ENCODE measurements at regions of chr6 and their contacts with region 1.

Region 1: GRCh38 chr6:100001915-100002388 is 7.9 kb upstream of the MCHR2 start:
- DNase-seq: peak; percentile 44
- H3K4me3 Mint-ChIP-seq: no peak overlapping the region
- H3K27ac Mint-ChIP-seq: no peak overlapping the region
- H3K4me1 Mint-ChIP-seq: no peaks in the 10 kb centered on the region
- H3K27me3 Mint-ChIP-seq: peaks cover 6% of the 10 kb centered on the region

Region 2: GRCh38 chr6:99613409-99613704 is 388.6 kb before region 1 on chr6:
- CTCF ChIA-PET with region 1: no interaction called
- DNase-seq: peak; percentile 45
- H3K4me3 Mint-ChIP-seq: peak overlapping the region; percentile 50
- H3K27ac Mint-ChIP-seq: no peak overlapping the region
- H3K4me1 Mint-ChIP-seq: peaks cover 24% of the 10 kb centered on the region
- H3K27me3 Mint-ChIP-seq: peaks cover 92% of the 10 kb centered on the region

Region 3: GRCh38 chr6:100099189-100100074 is 97.5 kb after region 1 on chr6:
- CTCF ChIA-PET with region 1: interaction called, 37 read pairs
- DNase-seq: no peak
- H3K4me3 Mint-ChIP-seq: no peak overlapping the region
- H3K27ac Mint-ChIP-seq: no peak overlapping the region
- H3K4me1 Mint-ChIP-seq: no peaks in the 10 kb centered on the region
- H3K27me3 Mint-ChIP-seq: peaks cover 4% of the 10 kb centered on the region

Measured in activated naive CD4-positive, alpha-beta T cell treated with anti-CD3 and anti-CD28 coated beads, Interleukin-2, amount 10 ng/mL, durations not matched to agents 7 days and 5 days (primary cell).